Caco-2 (cell line): ENCODE measurements at regions of chr12 and their contacts with region 1.

Region 1: DNA sequence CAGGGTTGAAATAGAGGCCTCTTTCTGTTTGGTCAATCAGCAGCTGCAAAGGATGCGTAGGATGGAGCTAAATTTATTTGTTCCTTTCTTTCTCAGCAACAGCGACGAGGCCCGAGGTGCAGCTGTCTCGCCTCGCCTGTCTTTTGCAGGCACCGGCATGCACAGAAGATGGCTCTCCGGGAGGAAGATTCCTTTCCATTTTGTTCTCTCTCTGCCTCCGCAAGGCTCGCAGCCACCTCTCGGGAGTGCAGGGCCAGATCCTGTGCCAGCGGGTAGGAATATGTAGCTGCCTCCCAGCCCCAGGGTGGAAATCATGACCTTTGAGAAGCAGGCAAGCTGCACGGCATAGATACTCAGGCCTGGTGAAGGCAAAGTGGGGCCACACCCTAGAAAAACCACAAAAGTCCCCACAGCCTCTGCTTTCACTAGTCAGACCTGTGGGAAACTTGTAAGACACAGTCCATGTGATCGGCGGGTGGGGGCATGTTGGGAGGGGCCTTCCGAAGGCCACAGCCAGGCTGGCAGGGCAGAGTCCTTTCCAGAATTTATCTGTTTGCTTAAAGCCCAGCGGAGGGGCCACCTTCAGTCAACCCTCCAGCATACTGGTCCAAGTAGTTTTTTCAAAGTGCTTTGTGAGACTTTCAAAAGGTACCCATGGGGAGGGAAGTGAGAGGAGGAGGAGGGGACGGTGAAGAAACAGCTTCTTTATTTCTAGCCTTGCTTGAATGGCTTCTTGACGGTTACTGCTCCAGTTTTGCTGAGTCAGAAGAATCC is at the start of gene MAP1LC3B2:
- DNase-seq: peak; percentile 81 to 94
- H3K4me3 ChIP-seq: no peak within 1 kb of the TSS
- H3K4me3 Mint-ChIP-seq: peak within 1 kb of the TSS; percentile 56
- H3K27ac Mint-ChIP-seq: peak within 1 kb of the TSS; percentile 92
- H3K4me1 ChIP-seq: peaks cover 21% of the 10 kb centered on the region
- H3K4me1 Mint-ChIP-seq: peaks cover 20% of the 10 kb centered on the region
- H3K27me3 ChIP-seq: no peaks in the 10 kb centered on the region
- H3K27me3 Mint-ChIP-seq: no peaks in the 10 kb centered on the region
- CTCF ChIP-seq: no peak
- total RNA-seq, gene MAP1LC3B2: 1.8 TPM in 1 of 2 replicates, not detected in the other

Region 2: DNA sequence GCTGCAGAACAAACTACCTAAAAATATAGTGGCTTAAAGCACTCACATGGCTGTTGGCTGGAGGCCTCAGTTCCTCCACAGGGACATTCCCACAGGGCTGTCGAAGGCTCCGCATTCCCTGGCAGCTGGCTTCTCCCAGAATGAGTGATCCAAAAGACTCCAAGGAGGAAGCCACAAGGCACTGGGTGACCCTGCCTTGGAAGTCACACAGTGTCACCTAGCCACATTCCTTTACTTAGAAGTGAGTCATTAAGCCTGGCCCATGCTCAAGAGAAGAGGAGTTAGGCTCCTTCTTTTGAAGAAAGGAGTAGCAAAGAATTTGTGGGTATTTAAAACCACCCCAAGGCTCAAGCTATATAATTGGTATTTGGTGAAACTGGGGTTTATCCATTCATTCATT is 64.1 kb before region 1 on chr12:
- CTCF ChIA-PET with region 1: no interaction called
- POLR2A ChIA-PET with region 1: interaction called, 10 read pairs
- intact Hi-C with region 1: no loop called
- DNase-seq: peak; percentile 71 to 82
- H3K4me3 ChIP-seq: no peak overlapping the region
- H3K4me3 Mint-ChIP-seq: peak overlapping the region; percentile 42
- H3K27ac Mint-ChIP-seq: peak overlapping the region; percentile 93
- H3K4me1 ChIP-seq: peaks cover 19% of the 10 kb centered on the region
- H3K4me1 Mint-ChIP-seq: peaks cover 41% of the 10 kb centered on the region
- H3K27me3 ChIP-seq: no peaks in the 10 kb centered on the region
- H3K27me3 Mint-ChIP-seq: no peaks in the 10 kb centered on the region
- CTCF ChIP-seq: no peak

Region 3: GRCh38 chr12:116533343-116534251 is 25.8 kb before region 1 on chr12:
- CTCF ChIA-PET with region 1: no interaction called
- POLR2A ChIA-PET with region 1: no interaction called
- intact Hi-C with region 1: loop called (anchors 1 kb)
- DNase-seq: peak; percentile 81 to 87
- H3K4me3 ChIP-seq: peak overlapping the region; percentile 65
- H3K4me3 Mint-ChIP-seq: peak overlapping the region; percentile 78
- H3K27ac Mint-ChIP-seq: no peak overlapping the region
- H3K4me1 ChIP-seq: peaks cover 24% of the 10 kb centered on the region
- H3K4me1 Mint-ChIP-seq: peaks cover 18% of the 10 kb centered on the region
- H3K27me3 ChIP-seq: no peaks in the 10 kb centered on the region
- H3K27me3 Mint-ChIP-seq: no peaks in the 10 kb centered on the region
- CTCF ChIP-seq: no peak